Activated naive CD4-positive, alpha-beta T cell treated with anti-CD3 and anti-CD28 coated beads for 36 hours (primary cell): ENCODE measurements at regions of chr1 and their contacts with region 1.

Region 1: GRCh38 chr1:92291372-92291999 is 7.3 kb downstream of the GLMN start:
- DNase-seq: no peak
- H3K4me3 Mint-ChIP-seq: no peak overlapping the region
- H3K27ac Mint-ChIP-seq: no peak overlapping the region
- H3K4me1 Mint-ChIP-seq: peaks cover 14% of the 10 kb centered on the region
- H3K27me3 Mint-ChIP-seq: no peaks in the 10 kb centered on the region

Region 2: DNA sequence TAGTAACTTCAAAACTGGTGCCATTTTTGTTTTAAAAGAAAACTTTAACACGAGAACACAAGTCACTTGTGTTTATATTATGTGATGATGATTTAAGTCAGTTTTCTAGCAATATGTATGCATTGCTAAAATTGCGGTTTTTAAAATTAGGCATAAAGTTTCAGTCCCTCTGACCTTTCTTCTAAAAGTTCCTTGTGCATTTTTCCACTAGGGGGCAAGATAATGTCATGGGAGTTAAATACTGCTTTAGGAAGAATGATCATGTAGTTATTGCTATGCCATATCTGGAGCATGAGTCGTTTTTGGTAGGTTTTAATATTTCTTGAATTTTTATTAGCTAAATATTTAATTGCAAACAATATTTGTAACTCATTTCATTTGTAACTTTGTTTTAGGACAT is 780.1 kb before region 1 on chr1:
- CTCF ChIA-PET with region 1: no interaction called
- intact Hi-C with region 1: loop called (anchors 5 kb)
- DNase-seq: no peak
- H3K4me3 Mint-ChIP-seq: no peak overlapping the region
- H3K27ac Mint-ChIP-seq: no peak overlapping the region
- H3K4me1 Mint-ChIP-seq: no peaks in the 10 kb centered on the region
- H3K27me3 Mint-ChIP-seq: no peaks in the 10 kb centered on the region

Region 3: DNA sequence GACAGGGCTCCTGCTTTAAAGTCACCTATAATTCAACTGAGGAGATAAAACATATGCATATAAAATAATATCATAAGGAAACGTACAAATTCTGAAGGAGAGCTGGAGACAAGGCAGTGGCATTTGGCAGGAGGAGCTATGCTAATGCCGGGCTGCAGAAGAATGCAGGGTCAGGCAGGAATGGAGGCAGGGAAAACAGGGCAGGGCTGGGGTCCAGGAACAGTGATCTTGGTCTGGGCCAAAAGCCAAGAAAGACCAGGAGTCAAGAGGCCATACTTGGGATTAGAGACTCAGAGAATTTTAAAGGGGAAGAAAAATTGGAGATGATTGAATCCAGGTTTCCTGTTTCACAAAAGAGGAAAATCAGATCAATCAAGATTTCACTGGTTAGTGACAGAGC is 362.2 kb before region 1 on chr1:
- CTCF ChIA-PET with region 1: no interaction called
- intact Hi-C with region 1: loop called (anchors 2 kb)
- DNase-seq: no peak
- H3K4me3 Mint-ChIP-seq: no peak overlapping the region
- H3K27ac Mint-ChIP-seq: no peak overlapping the region
- H3K4me1 Mint-ChIP-seq: peaks cover 1% of the 10 kb centered on the region
- H3K27me3 Mint-ChIP-seq: no peaks in the 10 kb centered on the region

Region 4: GRCh38 chr1:91997607-91998195 is 293.8 kb before region 1 on chr1:
- CTCF ChIA-PET with region 1: interaction called, 37 read pairs
- intact Hi-C with region 1: loop called (anchors 1 kb)
- DNase-seq: peak; percentile 71
- H3K4me3 Mint-ChIP-seq: no peak overlapping the region
- H3K27ac Mint-ChIP-seq: no peak overlapping the region
- H3K4me1 Mint-ChIP-seq: no peaks in the 10 kb centered on the region
- H3K27me3 Mint-ChIP-seq: no peaks in the 10 kb centered on the region

Region 5: DNA sequence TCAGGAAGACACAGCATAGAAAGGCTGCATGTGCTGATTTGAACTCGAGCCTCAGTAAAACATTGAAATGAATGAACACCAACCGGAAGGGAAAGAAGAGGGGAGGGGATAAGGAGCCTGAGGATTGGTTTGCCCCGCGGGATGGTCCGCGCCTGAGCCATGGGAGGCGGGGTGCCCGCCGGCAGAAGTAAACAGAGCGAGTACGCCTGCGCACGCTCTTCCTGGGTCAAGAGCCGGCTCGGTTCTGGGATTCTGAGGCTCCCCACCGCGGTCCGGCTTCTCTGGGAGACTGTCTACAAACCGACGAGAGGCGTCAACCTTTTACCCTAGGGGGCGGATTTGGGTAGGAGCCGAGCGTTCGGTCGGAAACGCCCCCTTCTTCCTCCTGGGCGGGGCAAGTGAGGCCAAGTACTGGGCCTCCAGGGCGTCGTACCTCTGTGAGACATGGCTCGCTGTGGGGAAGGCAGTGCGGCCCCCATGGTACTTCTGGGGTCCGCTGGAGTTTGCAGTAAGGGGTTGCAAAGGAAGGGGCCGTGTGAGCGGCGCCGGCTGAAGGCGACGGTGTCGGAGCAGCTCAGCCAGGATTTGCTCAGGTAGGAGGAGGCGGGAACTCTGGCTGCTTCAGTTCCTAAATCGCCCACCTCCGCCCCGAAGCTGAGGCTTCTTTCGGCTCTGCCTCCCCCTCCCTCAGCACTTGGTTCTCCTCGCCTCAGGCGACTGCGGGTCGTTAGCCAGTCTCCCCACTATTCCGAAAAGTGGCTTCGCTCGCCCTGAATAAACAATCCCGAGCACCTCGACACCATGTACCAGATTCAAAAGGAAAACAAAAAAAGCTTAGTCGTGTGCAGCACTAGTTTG is 211.1 kb before region 1 on chr1 and contains the start of gene BTBD8:
- CTCF ChIA-PET with region 1: interaction called, 3 read pairs
- intact Hi-C with region 1: loop called (anchors 2 kb)
- DNase-seq: peak; percentile 90
- H3K4me3 Mint-ChIP-seq: peak within 1 kb of the TSS; percentile 93
- H3K27ac Mint-ChIP-seq: peak within 1 kb of the TSS; percentile 80
- H3K4me1 Mint-ChIP-seq: peaks cover 9% of the 10 kb centered on the region
- H3K27me3 Mint-ChIP-seq: no peaks in the 10 kb centered on the region
- total RNA-seq, gene BTBD8: 2.0 to 2.7 TPM

Region 6: DNA sequence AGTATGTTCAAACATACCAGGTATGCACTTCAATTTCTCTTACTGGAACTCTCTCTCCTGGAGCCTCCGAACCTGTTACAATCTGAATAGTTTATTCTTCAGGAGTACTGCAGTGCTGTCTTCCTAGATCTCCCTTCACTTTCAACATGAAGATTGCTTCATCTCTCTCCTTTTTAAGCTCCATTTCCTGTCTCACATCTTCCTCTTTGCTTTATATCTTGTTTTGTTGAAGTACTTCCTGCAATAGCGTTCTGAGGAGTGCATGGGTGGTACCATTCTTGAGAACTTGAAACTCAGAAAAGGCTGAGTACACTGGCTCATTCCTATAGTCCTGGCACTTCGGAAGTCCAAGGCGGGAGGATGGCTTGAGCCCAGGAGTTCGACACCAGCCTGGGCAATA is 89.5 kb before region 1 on chr1:
- CTCF ChIA-PET with region 1: no interaction called
- intact Hi-C with region 1: loop called (anchors 2 kb)
- DNase-seq: no peak
- H3K4me3 Mint-ChIP-seq: no peak overlapping the region
- H3K27ac Mint-ChIP-seq: peak overlapping the region; percentile 51
- H3K4me1 Mint-ChIP-seq: peaks cover 21% of the 10 kb centered on the region
- H3K27me3 Mint-ChIP-seq: no peaks in the 10 kb centered on the region

Region 7: GRCh38 chr1:92317836-92318493 is 26.5 kb after region 1 on chr1:
- CTCF ChIA-PET with region 1: no interaction called
- intact Hi-C with region 1: no loop called
- DNase-seq: no peak
- H3K4me3 Mint-ChIP-seq: no peak overlapping the region
- H3K27ac Mint-ChIP-seq: no peak overlapping the region
- H3K4me1 Mint-ChIP-seq: peaks cover 55% of the 10 kb centered on the region
- H3K27me3 Mint-ChIP-seq: no peaks in the 10 kb centered on the region

Region 8: GRCh38 chr1:92831762-92832536 is 540.5 kb after region 1 on chr1 and contains the start of gene RPL5:
- CTCF ChIA-PET with region 1: no interaction called
- intact Hi-C with region 1: no loop called
- DNase-seq: peak; percentile 98
- H3K4me3 Mint-ChIP-seq: peak within 1 kb of the TSS; percentile 98
- H3K27ac Mint-ChIP-seq: peak within 1 kb of the TSS; percentile 99
- H3K4me1 Mint-ChIP-seq: peaks cover 38% of the 10 kb centered on the region
- H3K27me3 Mint-ChIP-seq: no peaks in the 10 kb centered on the region
- total RNA-seq, gene RPL5: 1,793 to 1,819 TPM